ENCODE measurements at regions of chr5 and their contacts with region 1.

Region 1: DNA sequence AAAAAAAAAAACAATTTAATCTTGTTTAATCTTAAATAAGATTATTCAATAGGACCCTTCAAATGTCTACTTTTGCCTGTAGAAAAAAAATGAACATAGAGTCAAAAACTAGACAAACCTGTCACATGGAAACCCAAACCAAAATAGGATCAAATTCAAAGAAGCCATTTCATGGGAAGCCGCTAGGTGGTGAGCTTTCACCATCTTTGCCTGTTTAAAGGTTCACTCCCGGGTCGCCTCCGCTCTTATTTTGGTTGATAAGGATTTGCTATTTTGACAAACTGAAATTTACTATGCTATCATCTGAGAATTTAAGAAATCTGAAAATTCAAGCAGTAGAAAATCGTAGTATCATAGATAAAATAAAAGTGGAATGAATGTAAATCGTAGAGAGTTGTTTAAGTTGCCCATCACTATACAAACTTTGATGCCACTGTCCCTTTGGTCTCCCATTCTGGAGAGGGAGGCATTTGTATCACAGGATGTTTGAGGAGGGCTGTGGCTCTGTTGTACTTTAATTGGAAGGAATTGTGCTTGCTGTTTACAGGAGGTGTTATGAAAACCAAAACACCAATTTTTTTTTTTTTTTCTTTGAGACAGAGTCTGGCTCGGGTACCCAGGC is 43.5 kb upstream of the DNAH5 start:
- DNase-seq: no peak
- H3K4me3 ChIP-seq: no peak overlapping the region
- H3K27ac ChIP-seq: no peak overlapping the region
- H3K4me1 ChIP-seq: peaks cover 0 to 7% (median 2%) of the 10 kb centered on the region in 4 donors
- H3K27me3 ChIP-seq: peaks cover 0 to 12% (median 0%) of the 10 kb centered on the region in 4 donors
- CTCF ChIP-seq: peak; percentile 83 to 85 (median 83)
- EP300 ChIP-seq: no peak
- POLR2A ChIP-seq: no peak

Region 2: GRCh38 chr5:13957032-13957645 is 30.8 kb before region 1 on chr5:
- intact Hi-C with region 1: no loop called
- DNase-seq: no peak
- H3K4me3 ChIP-seq: no peak overlapping the region
- H3K27ac ChIP-seq: no peak overlapping the region
- H3K4me1 ChIP-seq: no peaks in the 10 kb centered on the region
- H3K27me3 ChIP-seq: peaks cover 0 to 8% (median 0%) of the 10 kb centered on the region in 4 donors
- CTCF ChIP-seq: peak; percentile 20 to 45 (median 32)
- EP300 ChIP-seq: no peak
- POLR2A ChIP-seq: no peak

Region 3: DNA sequence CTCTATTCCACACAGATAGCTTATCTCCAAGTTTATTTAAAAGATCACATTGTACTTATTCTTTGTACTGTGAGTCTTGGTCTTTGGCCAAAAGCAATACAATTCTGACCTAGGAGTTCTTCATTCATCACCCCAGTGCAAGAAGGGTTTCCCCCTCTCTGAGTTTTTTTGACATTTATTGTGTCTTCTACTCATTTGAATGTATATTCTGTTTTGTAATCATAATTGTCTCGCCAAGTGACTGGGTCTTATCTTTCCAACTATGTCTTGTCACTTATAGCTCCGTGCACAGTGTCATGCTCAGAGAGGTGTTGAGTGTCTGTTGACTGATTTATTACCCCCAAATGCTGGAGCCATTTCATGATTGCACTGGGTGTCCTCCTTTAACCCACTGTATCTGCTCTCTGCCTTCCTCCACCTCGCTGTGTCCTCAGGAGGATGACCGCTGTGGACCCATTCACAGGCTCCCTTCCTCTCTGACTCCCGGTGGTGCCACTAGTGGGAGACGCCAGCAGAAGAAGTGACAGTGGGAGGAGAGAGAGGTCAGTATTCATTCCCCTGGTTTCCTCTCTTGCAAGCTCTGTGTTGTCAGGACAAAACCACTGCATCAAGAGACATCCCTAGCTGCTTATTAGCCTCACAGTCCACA is 144.0 kb after region 1 on chr5:
- intact Hi-C with region 1: no loop called
- DNase-seq: no peak
- H3K4me3 ChIP-seq: no peak overlapping the region
- H3K27ac ChIP-seq: no peak overlapping the region
- H3K4me1 ChIP-seq: peaks cover 0 to 6% (median 0%) of the 10 kb centered on the region in 4 donors
- H3K27me3 ChIP-seq: no peaks in the 10 kb centered on the region
- CTCF ChIP-seq: no peak
- EP300 ChIP-seq: no peak
- POLR2A ChIP-seq: no peak

Region 4: DNA sequence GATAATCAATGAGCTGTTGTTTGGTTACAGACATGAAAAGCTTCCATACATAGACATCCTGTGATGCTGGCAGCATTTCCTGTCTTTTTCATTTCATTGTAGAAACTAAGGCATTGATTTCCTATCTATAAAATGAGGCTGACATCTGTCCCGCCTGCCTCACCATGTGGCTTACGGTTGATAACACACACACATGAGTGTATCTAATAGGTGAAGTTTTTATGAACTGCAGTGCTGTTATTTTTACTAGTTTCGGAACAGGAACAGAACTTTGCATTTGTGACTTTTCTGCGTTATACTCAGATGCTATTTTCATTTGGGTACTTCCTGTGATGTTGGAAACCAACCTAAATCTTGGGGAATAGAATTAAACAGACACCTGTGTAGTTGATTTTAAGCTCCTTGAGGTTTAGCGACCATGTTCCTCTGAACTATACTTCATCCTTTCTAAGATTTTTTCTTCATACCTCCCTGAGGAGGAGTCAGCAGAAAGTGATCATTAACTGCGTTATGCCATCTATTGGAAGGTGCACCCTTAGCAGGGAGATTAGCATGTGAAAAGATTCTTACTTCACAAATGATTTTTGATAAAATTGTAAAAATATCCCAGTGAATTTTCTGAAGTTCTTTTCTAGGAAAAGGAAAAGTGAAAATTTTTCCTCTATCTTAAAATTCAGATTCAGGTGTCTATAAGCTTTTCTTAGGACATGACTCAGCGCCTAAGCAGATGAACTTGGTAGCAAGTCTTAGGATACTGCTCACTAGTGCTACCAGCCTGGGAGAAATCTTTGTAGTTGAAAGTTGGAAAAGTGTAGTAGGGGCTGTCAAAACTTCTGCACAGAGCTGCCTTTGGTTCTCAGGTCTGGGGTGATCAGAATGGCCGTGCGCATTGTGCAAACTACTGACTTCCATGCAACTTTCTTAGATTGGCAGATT is 289.7 kb after region 1 on chr5:
- intact Hi-C with region 1: loop called (anchors 5 kb)
- DNase-seq: no peak
- H3K4me3 ChIP-seq: no peak overlapping the region
- H3K27ac ChIP-seq: no peak overlapping the region
- H3K4me1 ChIP-seq: peaks cover 0 to 31% (median 19%) of the 10 kb centered on the region in 4 donors
- H3K27me3 ChIP-seq: no peaks in the 10 kb centered on the region
- CTCF ChIP-seq: no peak
- EP300 ChIP-seq: no peak
- POLR2A ChIP-seq: no peak

Measured in esophagus muscularis mucosa (tissue), 4 donors.